Naive thymus-derived CD4-positive, alpha-beta T cell (primary cell): ENCODE measurements at regions of chr17 and their contacts with region 1.

Region 1: GRCh38 chr17:54992797-54993639 is 24.5 kb downstream of the STXBP4 start:
- DNase-seq: peak in 7 of 9 donors; percentile 12 to 56 (median 36)
- ATAC-seq: peak; percentile 77
- H3K4me3 ChIP-seq: no peak overlapping the region
- H3K4me3 Mint-ChIP-seq: no peak overlapping the region
- H3K27ac ChIP-seq: no peak overlapping the region
- H3K27ac Mint-ChIP-seq: no peak overlapping the region
- H3K4me1 ChIP-seq: no peaks in the 10 kb centered on the region
- H3K4me1 Mint-ChIP-seq: peaks cover 0 to 1% (median 0%) of the 10 kb centered on the region in 7 donors
- H3K27me3 ChIP-seq: no peaks in the 10 kb centered on the region
- H3K27me3 Mint-ChIP-seq: no peaks in the 10 kb centered on the region

Region 2: GRCh38 chr17:54968262-54968987 is 24.6 kb before region 1 on chr17 and contains the starts of genes COX11 and STXBP4:
- CTCF ChIA-PET with region 1: interaction called, 6 read pairs
- POLR2A ChIA-PET with region 1: no interaction called
- intact Hi-C with region 1: loop called in 1 of 2 experiments (anchors 1 kb)
- DNase-seq: peak; percentile 88 to 96 (median 94)
- ATAC-seq: peak; percentile 97
- H3K4me3 ChIP-seq: peak within 1 kb of the TSS; percentile 98
- H3K4me3 Mint-ChIP-seq: no peak within 1 kb of the TSS
- H3K27ac ChIP-seq: peak within 1 kb of the TSS; percentile 85
- H3K27ac Mint-ChIP-seq: no peak within 1 kb of the TSS
- H3K4me1 ChIP-seq: peaks cover 8 to 15% of the 10 kb centered on the region in 2 donors
- H3K4me1 Mint-ChIP-seq: peaks cover 5 to 41% (median 30%) of the 10 kb centered on the region in 7 donors
- H3K27me3 ChIP-seq: no peaks in the 10 kb centered on the region
- H3K27me3 Mint-ChIP-seq: no peaks in the 10 kb centered on the region
- total RNA-seq, gene COX11: 25.7 to 92.9 (median 53.6) TPM
- total RNA-seq, gene STXBP4: 5.2 to 12.1 (median 9.4) TPM

Region 3: DNA sequence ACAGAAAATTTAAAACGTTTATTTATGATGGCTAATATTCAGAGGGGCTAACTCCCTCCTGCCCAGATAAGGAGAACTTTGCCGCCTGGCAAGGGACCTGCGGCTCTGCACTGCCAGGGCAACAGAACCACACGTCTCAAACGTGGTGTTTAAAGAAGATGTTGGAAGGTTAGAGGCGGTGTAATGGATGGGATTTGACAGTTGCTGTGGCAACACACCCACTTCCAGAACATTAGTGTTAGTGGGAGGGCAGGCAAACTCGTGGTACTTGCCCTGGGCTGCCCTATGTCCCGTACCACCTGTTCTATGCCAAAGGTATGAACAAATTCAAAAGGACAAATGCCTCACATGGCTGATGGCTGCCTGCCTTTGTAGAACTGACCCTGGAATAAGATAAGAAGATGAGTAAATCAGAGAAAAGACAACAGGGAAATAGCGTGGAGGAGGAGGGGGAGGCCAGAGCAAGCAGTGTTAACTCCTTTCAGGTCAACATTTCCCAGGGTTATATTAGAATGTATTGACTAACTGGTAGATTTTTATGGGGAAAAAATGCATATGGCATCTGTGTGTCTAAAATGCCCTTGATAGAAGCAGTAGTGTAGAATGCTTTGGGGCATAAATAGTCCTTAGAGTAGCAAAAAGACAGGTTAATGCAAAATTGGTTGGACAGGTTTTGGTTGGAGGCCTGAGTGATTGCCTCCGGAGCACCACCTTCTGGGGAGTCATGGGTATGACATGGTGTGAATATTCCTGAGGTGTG is 302.6 kb after region 1 on chr17:
- CTCF ChIA-PET with region 1: interaction called, 10 read pairs
- POLR2A ChIA-PET with region 1: interaction called, 3 read pairs
- intact Hi-C with region 1: loop called (anchors 1 kb)
- DNase-seq: peak; percentile 9 to 60 (median 50)
- ATAC-seq: peak; percentile 86
- H3K4me3 ChIP-seq: no peak overlapping the region
- H3K4me3 Mint-ChIP-seq: no peak overlapping the region
- H3K27ac ChIP-seq: no peak overlapping the region
- H3K27ac Mint-ChIP-seq: no peak overlapping the region
- H3K4me1 ChIP-seq: no peaks in the 10 kb centered on the region
- H3K4me1 Mint-ChIP-seq: peaks cover 0 to 6% (median 0%) of the 10 kb centered on the region in 7 donors
- H3K27me3 ChIP-seq: no peaks in the 10 kb centered on the region
- H3K27me3 Mint-ChIP-seq: peaks cover 0 to 21% (median 9%) of the 10 kb centered on the region in 5 donors

Region 4: DNA sequence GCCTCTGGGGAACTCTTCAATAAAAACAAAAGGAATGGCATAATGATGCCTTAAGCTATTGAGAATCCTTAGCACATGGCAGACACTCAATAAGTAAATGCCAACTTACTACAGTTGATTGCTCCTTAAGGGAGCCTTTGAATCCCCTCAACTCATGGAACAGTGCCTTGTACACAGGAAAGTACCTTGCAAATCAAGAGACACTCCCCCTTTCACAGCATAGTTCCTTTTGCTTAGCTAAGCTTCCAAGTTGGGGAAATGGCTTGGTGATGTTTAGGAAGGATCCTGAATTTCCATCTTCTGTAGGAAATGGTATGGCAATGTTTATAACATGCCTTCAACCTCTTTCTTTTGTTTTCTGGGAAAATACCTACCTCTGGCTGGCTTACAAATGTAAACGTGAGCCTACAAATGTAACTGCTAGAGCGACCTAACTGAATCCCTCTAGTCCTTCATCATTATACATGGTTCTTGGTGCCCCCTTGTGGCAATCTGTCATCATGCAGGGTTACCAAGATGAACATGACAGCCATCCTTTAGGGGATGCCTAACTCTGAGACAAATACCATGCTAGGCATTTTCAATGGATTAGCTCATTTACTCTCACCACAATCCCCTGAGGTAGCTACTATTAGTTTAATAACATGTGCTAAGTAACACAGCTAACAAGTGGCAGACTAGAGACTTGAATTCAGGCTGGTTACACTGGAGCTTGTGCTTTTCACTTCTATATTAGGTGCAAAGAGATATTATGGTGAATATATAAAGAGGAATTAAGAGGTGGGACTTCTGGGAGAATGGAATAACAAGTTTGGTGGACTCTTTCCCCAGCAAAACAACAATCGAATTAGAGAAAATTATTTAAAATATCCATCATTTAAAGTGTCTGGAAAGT is 363.7 kb after region 1 on chr17:
- CTCF ChIA-PET with region 1: interaction called, 5 read pairs
- POLR2A ChIA-PET with region 1: no interaction called
- intact Hi-C with region 1: loop called in 1 of 2 experiments (anchors 1 kb)
- DNase-seq: peak in 8 of 9 donors; percentile 18 to 62 (median 48)
- ATAC-seq: peak; percentile 87
- H3K4me3 ChIP-seq: no peak overlapping the region
- H3K4me3 Mint-ChIP-seq: no peak overlapping the region
- H3K27ac ChIP-seq: no peak overlapping the region
- H3K27ac Mint-ChIP-seq: no peak overlapping the region
- H3K4me1 ChIP-seq: no peaks in the 10 kb centered on the region
- H3K4me1 Mint-ChIP-seq: peaks cover 0 to 11% (median 2%) of the 10 kb centered on the region in 7 donors
- H3K27me3 ChIP-seq: no peaks in the 10 kb centered on the region
- H3K27me3 Mint-ChIP-seq: peaks cover 14 to 41% (median 15%) of the 10 kb centered on the region in 5 donors

Region 5: DNA sequence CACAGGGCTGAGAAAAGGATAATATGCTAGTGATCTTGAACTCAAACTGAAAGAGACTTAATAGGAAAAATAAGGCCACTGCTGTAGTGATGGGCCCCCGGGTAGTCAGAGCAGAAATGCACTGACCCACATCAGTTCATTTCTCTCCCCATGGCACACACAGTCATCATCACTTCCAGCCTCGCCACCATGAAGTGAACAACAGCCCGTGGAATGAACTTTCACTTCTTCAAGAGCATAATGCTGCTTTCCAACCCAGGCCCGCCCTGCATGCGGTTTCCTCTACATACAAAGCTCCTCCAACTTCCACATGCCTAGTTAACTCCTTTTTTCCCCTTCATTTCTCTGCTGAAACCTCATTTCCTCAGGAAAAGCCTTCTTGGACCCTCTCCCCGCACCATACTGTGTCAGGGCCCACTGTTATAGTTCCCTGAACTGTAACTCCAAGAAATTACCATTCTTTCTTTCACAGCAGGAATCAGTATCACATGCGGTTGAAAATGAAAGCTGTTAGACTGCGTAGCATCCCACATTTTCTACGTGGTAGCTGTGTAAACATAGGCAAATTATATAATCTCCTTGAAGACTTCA is 584.1 kb after region 1 on chr17:
- CTCF ChIA-PET with region 1: interaction called, 10 read pairs
- POLR2A ChIA-PET with region 1: no interaction called
- intact Hi-C with region 1: no loop called
- DNase-seq: peak in 8 of 9 donors; percentile 11 to 56 (median 50)
- ATAC-seq: peak; percentile 88
- H3K4me3 ChIP-seq: peak overlapping the region; percentile 49
- H3K4me3 Mint-ChIP-seq: no peak overlapping the region
- H3K27ac ChIP-seq: peak overlapping the region; percentile 60
- H3K27ac Mint-ChIP-seq: no peak overlapping the region
- H3K4me1 ChIP-seq: peaks cover 0 to 16% of the 10 kb centered on the region in 2 donors
- H3K4me1 Mint-ChIP-seq: peaks cover 0 to 10% (median 0%) of the 10 kb centered on the region in 7 donors
- H3K27me3 ChIP-seq: no peaks in the 10 kb centered on the region
- H3K27me3 Mint-ChIP-seq: peaks cover 0 to 13% (median 0%) of the 10 kb centered on the region in 5 donors